Sigmoid colon (tissue), 7 donors: ENCODE measurements at regions of chr2 and their contacts with region 1.

Region 1: DNA sequence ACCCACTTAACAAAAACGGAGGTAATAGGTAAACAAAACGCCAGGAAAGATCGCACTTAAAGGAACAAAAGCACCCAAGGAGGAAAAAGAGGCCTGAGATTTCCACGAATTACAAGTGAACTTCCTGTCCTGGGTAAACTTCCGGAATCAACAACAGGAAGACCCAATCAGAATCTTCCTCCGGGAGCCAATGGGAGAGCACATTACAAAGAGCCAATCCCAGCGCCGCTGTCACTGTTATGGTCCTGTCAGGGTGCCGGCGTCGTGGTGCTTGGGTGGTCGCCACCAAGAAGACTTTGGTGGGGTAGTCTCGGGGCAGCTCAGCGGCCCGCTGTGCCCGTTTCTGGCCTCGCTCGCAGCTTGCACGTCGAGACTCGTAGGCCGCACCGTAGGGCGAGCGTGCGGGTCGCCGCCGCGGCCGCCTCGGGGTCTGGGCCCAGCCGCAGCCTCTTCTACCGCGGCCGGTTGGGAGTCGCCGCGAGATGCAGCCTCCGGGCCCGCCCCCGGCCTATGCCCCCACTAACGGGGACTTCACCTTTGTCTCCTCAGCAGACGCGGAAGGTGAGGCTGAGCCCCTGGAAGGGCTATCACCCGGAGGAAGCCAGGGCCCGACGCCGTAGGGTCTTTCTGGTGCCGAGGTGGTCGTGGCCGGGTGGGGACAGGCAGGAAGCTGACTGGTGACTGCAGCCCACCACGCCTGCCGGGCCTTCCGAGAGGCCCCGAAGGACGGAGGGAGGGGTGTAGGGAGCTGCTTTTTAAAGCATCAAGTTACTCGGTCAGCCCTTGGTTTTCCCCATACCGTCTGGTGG is at the start of gene YIPF4:
- DNase-seq: peak; percentile 93
- H3K4me3 ChIP-seq: peak within 1 kb of the TSS; percentile 73 to 93 (median 86)
- H3K27ac ChIP-seq: peak within 1 kb of the TSS; percentile 80 to 87 (median 84)
- H3K4me1 ChIP-seq: peaks cover 0 to 38% (median 23%) of the 10 kb centered on the region in 4 donors
- H3K27me3 ChIP-seq: no peaks in the 10 kb centered on the region
- CTCF ChIP-seq: no peak
- EP300 ChIP-seq: no peak
- POLR2A ChIP-seq: no peak
- total RNA-seq, gene YIPF4: 14.1 to 26.4 (median 23.2) TPM

Region 2: DNA sequence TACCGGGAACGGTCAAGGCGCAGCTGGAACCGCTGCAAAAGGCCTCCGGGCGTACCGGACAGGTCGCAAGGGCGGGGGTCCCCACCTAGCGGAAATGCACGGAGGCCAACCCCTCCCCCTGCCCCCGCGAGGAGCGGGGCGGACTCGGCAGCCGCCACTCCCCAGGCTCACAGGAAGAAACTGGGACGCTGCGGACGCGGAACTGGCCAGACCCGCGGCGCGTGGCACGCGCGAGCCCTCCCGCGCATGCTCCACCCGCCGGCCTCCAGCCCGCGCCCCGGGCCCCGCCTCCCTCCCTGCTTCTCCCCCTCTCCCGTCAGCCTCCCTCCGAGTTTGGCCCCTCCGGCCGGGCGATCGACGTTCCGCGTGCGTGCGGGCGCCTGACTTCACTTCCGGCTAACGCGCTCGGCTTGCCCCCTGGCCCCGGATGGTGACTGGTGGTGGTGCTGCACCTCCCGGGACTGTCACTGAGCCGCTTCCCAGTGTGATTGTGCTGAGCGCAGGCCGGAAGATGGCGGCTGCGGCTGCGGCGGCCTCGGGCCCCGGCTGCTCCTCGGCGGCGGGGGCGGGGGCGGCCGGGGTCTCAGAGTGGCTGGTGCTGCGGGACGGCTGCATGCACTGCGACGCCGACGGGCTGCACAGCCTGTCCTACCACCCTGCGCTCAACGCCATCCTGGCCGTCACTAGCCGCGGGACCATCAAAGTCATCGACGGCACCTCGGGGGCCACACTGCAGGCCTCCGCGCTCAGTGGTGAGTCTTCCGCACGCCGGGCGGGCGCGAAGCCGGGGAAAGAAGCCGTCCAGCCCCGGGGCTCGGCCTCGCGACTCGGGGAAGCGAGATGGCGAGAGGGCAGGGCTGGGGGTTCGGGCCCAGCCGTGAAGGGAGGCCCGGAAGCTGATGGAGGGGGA is 79.1 kb after region 1 on chr2 and contains the start of gene BIRC6:
- intact Hi-C with region 1: loop called (anchors 1 kb)
- DNase-seq: peak; percentile 99
- H3K4me3 ChIP-seq: peak within 1 kb of the TSS; percentile 89 to 99 (median 96)
- H3K27ac ChIP-seq: peak within 1 kb of the TSS; percentile 92 to 99 (median 99)
- H3K4me1 ChIP-seq: peaks cover 0 to 41% (median 31%) of the 10 kb centered on the region in 4 donors
- H3K27me3 ChIP-seq: no peaks in the 10 kb centered on the region
- CTCF ChIP-seq: no peak
- EP300 ChIP-seq: no peak
- POLR2A ChIP-seq: peak; percentile 61 to 70
- total RNA-seq, gene BIRC6: 86.4 to 122 (median 110) TPM

Region 3: GRCh38 chr2:32425719-32426141 is 147.9 kb after region 1 on chr2:
- intact Hi-C with region 1: no loop called
- DNase-seq: no peak
- H3K4me3 ChIP-seq: no peak overlapping the region
- H3K27ac ChIP-seq: peak overlapping the region in 2 of 4 donors; percentile 13 to 25
- H3K4me1 ChIP-seq: peaks cover 0 to 53% (median 43%) of the 10 kb centered on the region in 4 donors
- H3K27me3 ChIP-seq: no peaks in the 10 kb centered on the region
- CTCF ChIP-seq: no peak
- EP300 ChIP-seq: no peak
- POLR2A ChIP-seq: no peak